Motor neuron (in vitro differentiated cells): ENCODE measurements at regions of chr1 and their contacts with region 1.

Region 1: GRCh38 chr1:74689621-74690363 is 16.2 kb upstream of the ERICH3 start:
- ATAC-seq: peak; percentile 38 to 71 (median 60)
- H3K4me3 ChIP-seq: no peak overlapping the region
- H3K27ac ChIP-seq: no peak overlapping the region
- H3K4me1 ChIP-seq: peaks cover 6 to 24% of the 10 kb centered on the region in 2 donors

Region 2: DNA sequence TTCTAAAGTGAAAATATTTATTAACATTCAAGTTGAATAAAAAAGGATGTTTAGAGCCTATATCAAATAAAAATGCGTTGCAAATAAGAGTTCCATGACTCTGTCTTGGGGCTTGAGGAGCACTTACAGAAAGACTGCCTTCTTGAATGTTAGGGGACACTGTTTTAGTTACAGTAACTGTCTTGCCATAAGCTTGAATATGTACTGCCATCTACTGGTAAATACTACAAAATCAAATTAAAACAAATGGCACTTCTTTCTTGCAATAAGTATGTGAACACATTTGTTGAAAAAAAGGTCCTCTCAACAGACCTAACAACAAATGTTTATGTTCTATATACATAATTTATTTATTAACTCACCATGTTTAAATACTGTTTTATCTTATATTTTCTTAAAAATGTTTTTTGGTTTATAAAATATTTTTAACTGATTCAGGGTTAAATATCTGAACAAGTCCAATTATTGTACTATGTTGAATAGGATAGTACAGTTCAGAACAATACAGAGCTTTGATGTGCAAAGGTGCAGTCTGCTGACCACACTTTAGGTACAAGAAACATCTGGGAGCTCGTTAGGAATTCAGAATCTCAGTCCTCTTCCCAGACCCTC is 691.3 kb before region 1 on chr1:
- in situ Hi-C with region 1: loop called in 1 of 9 experiments (anchors 25 kb)
- ATAC-seq: peak in 7 of 8 experiments; percentile 21 to 74 (median 65)
- H3K4me3 ChIP-seq: no peak overlapping the region
- H3K27ac ChIP-seq: no peak overlapping the region
- H3K4me1 ChIP-seq: no peaks in the 10 kb centered on the region

Region 3: GRCh38 chr1:74380252-74380651 is 309.5 kb before region 1 on chr1:
- in situ Hi-C with region 1: no loop called
- ATAC-seq: no peak
- H3K4me3 ChIP-seq: no peak overlapping the region
- H3K27ac ChIP-seq: no peak overlapping the region
- H3K4me1 ChIP-seq: peaks cover under 1 to 8% of the 10 kb centered on the region in 2 donors

Region 4: GRCh38 chr1:74504125-74504932 is 185.5 kb before region 1 on chr1:
- in situ Hi-C with region 1: loop called in 2 of 9 experiments (anchors 25 kb)
- ATAC-seq: peak; percentile 58 to 94 (median 74)
- H3K4me3 ChIP-seq: no peak overlapping the region
- H3K27ac ChIP-seq: peak overlapping the region; percentile 4 to 41
- H3K4me1 ChIP-seq: peaks cover 26 to 34% of the 10 kb centered on the region in 2 donors